Breast epithelium (tissue), 4 donors: ENCODE measurements at regions of chr6 and their contacts with region 1.

Region 1: GRCh38 chr6:53326372-53327016 is 22.3 kb downstream of the ELOVL5 start:
- DNase-seq: peak; percentile 74 to 80
- H3K4me3 ChIP-seq: no peak overlapping the region
- H3K27ac ChIP-seq: peak overlapping the region; percentile 54 to 72
- H3K4me1 ChIP-seq: peaks cover 0 to 8% of the 10 kb centered on the region in 2 donors
- H3K27me3 ChIP-seq: no peaks in the 10 kb centered on the region
- CTCF ChIP-seq: no peak
- POLR2A ChIP-seq: no peak

Region 2: GRCh38 chr6:52887910-52888535 is 438.5 kb before region 1 on chr6:
- intact Hi-C with region 1: loop called (anchors 5 kb)
- DNase-seq: no peak
- H3K4me3 ChIP-seq: no peak overlapping the region
- H3K27ac ChIP-seq: no peak overlapping the region
- H3K4me1 ChIP-seq: no peaks in the 10 kb centered on the region
- H3K27me3 ChIP-seq: no peaks in the 10 kb centered on the region
- CTCF ChIP-seq: no peak
- POLR2A ChIP-seq: no peak

Region 3: GRCh38 chr6:53263917-53264316 is 62.6 kb before region 1 on chr6:
- intact Hi-C with region 1: no loop called
- DNase-seq: no peak
- H3K4me3 ChIP-seq: no peak overlapping the region
- H3K27ac ChIP-seq: no peak overlapping the region
- H3K4me1 ChIP-seq: no peaks in the 10 kb centered on the region
- H3K27me3 ChIP-seq: no peaks in the 10 kb centered on the region
- CTCF ChIP-seq: no peak
- POLR2A ChIP-seq: no peak

Region 4: GRCh38 chr6:53309059-53309900 is 17.2 kb before region 1 on chr6:
- intact Hi-C with region 1: no loop called
- DNase-seq: no peak
- H3K4me3 ChIP-seq: no peak overlapping the region
- H3K27ac ChIP-seq: peak overlapping the region in 1 of 2 donors; percentile 23
- H3K4me1 ChIP-seq: no peaks in the 10 kb centered on the region
- H3K27me3 ChIP-seq: no peaks in the 10 kb centered on the region
- CTCF ChIP-seq: no peak
- POLR2A ChIP-seq: no peak